Sigmoid colon (tissue), 7 donors: ENCODE measurements at regions of chr3 and their contacts with region 1.

Region 1: DNA sequence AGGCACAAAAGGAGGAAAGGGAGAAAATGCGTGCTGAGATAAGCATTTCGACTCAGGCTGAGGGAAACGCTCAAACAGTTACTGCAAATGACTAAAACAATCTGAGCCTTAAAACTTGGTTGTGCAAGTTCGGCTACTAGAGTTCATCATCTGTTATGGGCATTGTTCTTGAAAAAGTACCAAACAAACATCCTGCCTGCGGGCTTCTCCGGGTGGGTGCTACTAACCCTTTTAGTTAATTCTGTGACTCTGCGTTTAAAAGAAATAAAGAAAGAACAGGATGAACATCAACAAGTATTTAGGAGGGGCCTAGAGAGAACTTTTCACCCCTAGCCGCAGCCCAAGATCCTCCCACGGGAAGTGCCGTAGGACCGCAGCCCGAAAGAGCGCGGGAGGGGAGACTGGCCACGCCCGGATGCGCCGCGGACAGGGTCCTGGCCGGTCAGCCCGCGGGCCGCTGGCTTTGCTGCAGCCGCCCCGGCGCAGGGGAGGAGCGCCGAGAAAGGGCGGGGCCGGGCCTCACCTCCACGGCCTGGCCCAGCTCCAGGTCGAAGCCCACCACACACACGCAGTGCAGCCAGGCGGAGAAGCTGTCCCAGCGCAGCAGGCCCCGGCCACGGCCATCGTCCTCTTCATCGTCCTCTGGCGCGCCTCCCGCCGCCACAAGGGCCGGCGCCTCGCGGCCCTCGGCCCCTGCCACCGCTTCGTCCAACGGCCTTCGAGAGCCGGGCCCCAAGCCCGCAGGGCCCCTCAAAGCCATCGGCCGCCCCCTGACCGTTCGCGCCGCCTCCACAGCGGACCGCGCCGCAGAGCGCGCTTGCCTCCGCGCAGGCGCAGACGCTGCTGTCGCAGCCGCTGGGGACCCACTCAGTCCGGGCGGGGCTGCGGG is at the start of gene DENND6A:
- DNase-seq: peak; percentile 95
- H3K4me3 ChIP-seq: peak within 1 kb of the TSS; percentile 84 to 99 (median 97)
- H3K27ac ChIP-seq: peak within 1 kb of the TSS; percentile 98 to 100 (median 100)
- H3K4me1 ChIP-seq: peaks cover 0 to 43% (median 38%) of the 10 kb centered on the region in 4 donors
- H3K27me3 ChIP-seq: no peaks in the 10 kb centered on the region
- CTCF ChIP-seq: no peak
- EP300 ChIP-seq: no peak
- POLR2A ChIP-seq: peak; percentile 87 to 96
- total RNA-seq, gene DENND6A: 23.8 to 51.7 (median 38.4) TPM

Region 2: GRCh38 chr3:57555738-57556458 is 136.6 kb before region 1 on chr3 and contains the start of gene PDE12:
- intact Hi-C with region 1: loop called (anchors 2 kb)
- DNase-seq: peak; percentile 92
- H3K4me3 ChIP-seq: peak within 1 kb of the TSS; percentile 80 to 93 (median 90)
- H3K27ac ChIP-seq: peak within 1 kb of the TSS; percentile 91 to 98 (median 94)
- H3K4me1 ChIP-seq: peaks cover 0 to 39% (median 30%) of the 10 kb centered on the region in 4 donors
- H3K27me3 ChIP-seq: no peaks in the 10 kb centered on the region
- CTCF ChIP-seq: no peak
- EP300 ChIP-seq: no peak
- POLR2A ChIP-seq: peak; percentile 62 to 83
- total RNA-seq, gene PDE12: 11.4 to 17.9 (median 12.4) TPM

Region 3: DNA sequence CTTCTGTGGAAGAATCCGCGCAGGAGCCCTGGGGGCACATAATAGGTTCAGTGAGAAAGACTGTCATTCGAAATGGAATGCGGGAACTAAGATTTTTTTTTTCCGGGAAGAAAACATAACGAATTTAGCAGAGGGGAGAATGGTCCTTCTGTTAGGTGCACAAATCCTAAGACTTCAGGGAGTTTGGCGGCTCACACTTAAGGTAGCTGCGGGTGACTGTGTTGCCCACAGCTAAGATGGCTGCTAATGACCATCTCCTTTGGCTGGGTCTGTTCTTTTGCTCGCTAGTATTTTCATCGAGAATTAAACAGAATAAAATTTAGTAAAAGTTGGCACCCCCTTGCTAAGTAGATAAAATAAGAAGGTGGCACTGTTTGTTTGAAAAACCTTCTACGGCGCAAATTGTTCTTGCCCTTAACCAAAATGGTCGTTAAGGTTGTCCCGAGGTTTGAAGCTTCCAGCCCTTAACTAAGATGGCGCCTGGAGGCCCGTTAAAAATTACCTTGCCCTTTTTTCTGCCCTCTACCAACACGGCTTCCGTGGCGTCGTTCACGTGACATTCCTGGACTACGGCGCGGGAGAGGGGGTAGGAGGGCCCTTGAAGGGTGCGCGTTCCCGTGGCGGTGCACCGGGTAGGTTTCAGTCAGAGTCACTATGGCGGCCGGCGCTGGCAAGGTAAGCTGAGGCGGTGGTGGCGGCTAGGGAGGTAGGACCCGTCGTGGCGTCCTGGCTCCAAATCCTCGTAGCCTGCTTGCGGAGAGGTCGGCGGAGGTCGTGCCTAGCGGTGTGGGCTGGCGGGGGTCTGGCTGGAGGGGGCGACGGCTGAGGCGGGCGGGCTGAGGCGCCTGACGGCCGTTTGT is 63.4 kb after region 1 on chr3 and contains the start of gene SLMAP:
- intact Hi-C with region 1: loop called (anchors 1 kb)
- DNase-seq: peak; percentile 99
- H3K4me3 ChIP-seq: peak within 1 kb of the TSS; percentile 80 to 96 (median 88)
- H3K27ac ChIP-seq: peak within 1 kb of the TSS; percentile 87 to 93 (median 90)
- H3K4me1 ChIP-seq: peaks cover 0 to 43% (median 36%) of the 10 kb centered on the region in 4 donors
- H3K27me3 ChIP-seq: no peaks in the 10 kb centered on the region
- CTCF ChIP-seq: no peak
- EP300 ChIP-seq: peak in 1 of 4 donors; percentile 26
- POLR2A ChIP-seq: peak in 1 of 2 donors; percentile 47
- total RNA-seq, gene SLMAP: 300 to 745 (median 456) TPM